Calu3 (cell line): ENCODE measurements at regions of chr6 and their contacts with region 1.

Region 1: GRCh38 chr6:166156942-166157341 is 10.7 kb downstream of the TBXT start:
- DNase-seq: no peak
- H3K4me3 Mint-ChIP-seq: no peak overlapping the region
- H3K27ac Mint-ChIP-seq: no peak overlapping the region
- H3K4me1 Mint-ChIP-seq: no peaks in the 10 kb centered on the region
- H3K27me3 Mint-ChIP-seq: peaks cover 32% of the 10 kb centered on the region
- CTCF ChIP-seq: no peak

Region 2: GRCh38 chr6:166382933-166383801 is 226.2 kb after region 1 on chr6 and contains the start of gene MPC1:
- CTCF ChIA-PET with region 1: no interaction called
- intact Hi-C with region 1: no loop called
- DNase-seq: peak; percentile 98
- H3K4me3 Mint-ChIP-seq: peak within 1 kb of the TSS; percentile 93
- H3K27ac Mint-ChIP-seq: peak within 1 kb of the TSS; percentile 74
- H3K4me1 Mint-ChIP-seq: peaks cover 14% of the 10 kb centered on the region
- H3K27me3 Mint-ChIP-seq: no peaks in the 10 kb centered on the region
- CTCF ChIP-seq: no peak
- total RNA-seq, gene MPC1: 41.5 and 48.9 TPM in 2 replicates

Region 3: DNA sequence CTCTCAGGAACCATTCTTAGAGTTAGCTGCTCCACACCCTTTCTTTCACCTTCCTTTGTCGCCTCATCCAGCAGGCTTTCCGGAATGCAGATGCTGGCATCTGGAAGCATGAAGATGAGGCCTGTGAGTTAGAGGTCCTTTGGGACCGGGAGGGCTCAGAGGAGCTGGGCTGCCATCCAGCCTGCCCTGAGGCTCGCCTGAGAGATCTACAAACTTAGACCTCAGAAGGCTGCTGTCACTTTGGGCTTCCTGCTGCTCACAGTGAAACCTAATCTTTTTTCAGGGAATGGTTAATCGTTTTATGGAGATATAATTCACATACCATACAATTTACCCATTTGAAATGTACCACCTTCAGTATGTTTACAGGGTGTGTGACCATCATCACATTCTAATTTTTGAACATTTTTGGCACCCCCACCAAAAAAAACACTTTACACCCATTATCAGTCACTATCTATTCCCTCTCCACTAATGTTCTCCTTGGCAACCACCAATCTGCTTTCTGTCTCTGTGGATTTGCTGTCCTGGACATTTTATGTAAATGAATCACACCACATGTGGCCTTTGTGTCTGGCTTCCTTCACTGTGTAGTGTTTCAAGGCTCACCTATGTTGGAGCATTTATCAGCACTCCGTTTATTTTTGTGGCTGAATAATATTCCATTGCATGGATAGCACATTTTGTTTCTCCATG is 245.8 kb after region 1 on chr6:
- CTCF ChIA-PET with region 1: interaction called, 20 read pairs
- intact Hi-C with region 1: loop called (anchors 1 kb)
- DNase-seq: no peak
- H3K4me3 Mint-ChIP-seq: no peak overlapping the region
- H3K27ac Mint-ChIP-seq: peak overlapping the region; percentile 27
- H3K4me1 Mint-ChIP-seq: no peaks in the 10 kb centered on the region
- H3K27me3 Mint-ChIP-seq: peaks cover 21% of the 10 kb centered on the region
- CTCF ChIP-seq: no peak